ENCODE measurements at regions of chr14 and their contacts with region 1.

Region 1: DNA sequence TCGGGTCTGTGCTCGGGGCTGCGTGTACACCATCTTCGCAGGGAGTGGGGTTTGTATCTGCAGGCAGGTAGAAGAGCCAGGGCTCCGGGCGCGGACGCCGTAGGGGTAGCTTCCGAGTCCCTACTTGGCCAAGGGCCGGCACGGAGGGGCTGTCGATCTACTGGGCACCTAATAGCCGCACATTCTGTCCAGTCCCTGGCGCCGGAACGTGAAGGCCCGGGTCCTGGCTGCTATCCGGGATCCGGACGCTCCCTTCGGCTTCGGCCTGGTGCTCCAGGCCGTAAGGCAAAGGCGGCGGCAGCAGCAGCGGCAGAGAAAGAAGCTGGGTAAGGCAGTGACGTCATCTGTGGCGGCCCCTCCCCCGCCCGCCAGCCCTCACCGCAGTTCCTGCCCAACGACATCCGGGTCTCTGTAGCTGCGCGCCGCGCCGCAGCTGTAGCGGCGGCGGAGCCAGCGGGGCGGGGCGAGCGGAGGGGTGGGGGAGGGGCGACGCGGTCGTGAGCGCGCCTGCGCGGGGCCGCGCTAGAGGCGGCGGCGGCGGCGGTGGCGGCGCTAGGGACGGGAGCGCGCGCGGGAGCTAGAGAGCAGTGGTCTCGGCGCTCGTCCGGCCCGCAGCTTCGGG is at the start of gene PPM1A:
- DNase-seq: peak; percentile 95 to 98 (median 97)
- H3K4me3 ChIP-seq: peak within 1 kb of the TSS; percentile 65 to 95 (median 84)
- H3K27ac ChIP-seq: peak within 1 kb of the TSS; percentile 94 to 98
- H3K4me1 ChIP-seq: peaks cover 21 to 44% (median 31%) of the 10 kb centered on the region in 4 experiments
- H3K27me3 ChIP-seq: no peaks in the 10 kb centered on the region

Region 2: GRCh38 chr14:60064491-60065072 is 184.2 kb before region 1 on chr14:
- CTCF ChIA-PET with region 1: no interaction called
- POLR2A ChIA-PET with region 1: no interaction called
- DNase-seq: peak; percentile 48 to 59 (median 53)
- H3K4me3 ChIP-seq: no peak overlapping the region
- H3K27ac ChIP-seq: no peak overlapping the region
- H3K4me1 ChIP-seq: no peaks in the 10 kb centered on the region
- H3K27me3 ChIP-seq: no peaks in the 10 kb centered on the region

Region 3: GRCh38 chr14:60195179-60195810 is 53.5 kb before region 1 on chr14:
- CTCF ChIA-PET with region 1: interaction called, 5 read pairs
- POLR2A ChIA-PET with region 1: interaction called, 12 read pairs
- DNase-seq: peak; percentile 43 to 52 (median 49)
- H3K4me3 ChIP-seq: no peak overlapping the region
- H3K27ac ChIP-seq: peak overlapping the region in 1 of 2 experiments; percentile 1
- H3K4me1 ChIP-seq: peaks cover 8 to 27% (median 22%) of the 10 kb centered on the region in 4 experiments
- H3K27me3 ChIP-seq: no peaks in the 10 kb centered on the region